HEK293T (cell line): ENCODE measurements at regions of chr5 and their contacts with region 1.

Region 1: DNA sequence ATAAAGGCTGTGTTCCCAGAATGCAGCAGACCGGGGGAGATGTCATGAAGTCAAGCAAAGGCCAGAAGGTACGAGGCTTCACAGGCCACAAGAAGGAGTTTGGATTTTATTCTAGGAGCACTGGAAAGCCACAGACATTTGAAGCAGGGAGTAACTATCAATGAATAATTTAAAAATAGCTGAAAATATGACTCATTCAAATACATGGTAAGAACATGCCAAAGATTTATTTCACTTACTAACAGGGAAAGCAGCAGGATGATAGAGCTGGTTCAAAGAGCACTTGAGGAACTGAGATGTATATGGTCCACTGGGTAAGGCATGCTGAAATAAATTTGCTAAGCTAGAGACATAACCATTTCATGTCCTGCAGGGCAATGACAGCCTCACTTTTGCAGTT is 53.2 kb downstream of the MSX2 start:
- DNase-seq: no peak

Region 2: GRCh38 chr5:174464504-174465165 is 312.9 kb before region 1 on chr5:
- CTCF ChIA-PET with region 1: no interaction called
- POLR2A ChIA-PET with region 1: no interaction called
- DNase-seq: no peak

Region 3: DNA sequence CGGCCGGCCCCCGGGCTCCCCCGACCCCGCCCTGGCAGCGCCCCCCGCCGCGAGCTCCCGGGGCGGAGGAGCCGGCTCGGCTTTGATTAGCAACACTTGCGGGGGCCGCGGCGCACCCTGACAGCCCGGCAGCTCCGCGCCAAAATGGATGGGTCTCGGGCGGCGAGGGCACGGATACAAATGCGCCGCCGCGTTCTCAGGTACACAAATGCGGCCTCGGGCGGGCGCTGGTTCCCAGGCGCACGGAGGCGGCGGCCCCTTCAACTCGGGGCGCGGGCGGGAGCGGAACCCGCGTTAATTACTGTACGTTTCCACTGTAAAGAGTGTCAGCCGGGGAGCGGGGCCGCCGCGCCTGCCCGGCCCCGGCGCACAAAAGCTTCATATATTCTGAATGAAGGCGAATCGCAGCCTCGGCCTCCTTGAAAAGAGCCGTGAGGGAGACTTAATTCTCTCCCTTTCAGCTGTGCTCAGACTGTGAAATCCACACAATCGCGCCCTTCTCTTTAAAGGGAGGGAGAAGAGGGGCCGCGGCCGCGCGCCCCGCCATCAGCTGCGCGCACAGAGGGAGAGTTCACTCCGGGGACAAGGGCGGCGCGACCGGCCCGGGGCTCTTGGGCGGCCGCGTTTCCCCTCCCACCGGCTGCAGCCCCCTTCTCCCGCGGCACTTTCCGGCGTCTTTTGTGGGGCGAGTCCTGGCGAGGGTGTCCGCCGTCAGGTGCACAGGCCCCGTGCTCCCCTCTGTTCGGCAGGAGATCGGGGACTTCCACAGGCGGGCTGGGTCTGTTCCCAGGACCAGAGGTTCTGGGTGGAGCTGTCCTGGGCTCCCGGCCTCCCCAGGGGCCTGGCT is 26.2 kb before region 1 on chr5:
- CTCF ChIA-PET with region 1: no interaction called
- POLR2A ChIA-PET with region 1: interaction called, 13 read pairs
- DNase-seq: peak; percentile 60

Region 4: GRCh38 chr5:174793684-174794328 is 16.2 kb after region 1 on chr5:
- CTCF ChIA-PET with region 1: interaction called, 11 read pairs
- POLR2A ChIA-PET with region 1: no interaction called
- DNase-seq: peak; percentile 88